Activated CD4-positive, alpha-beta memory T cell treated with anti-CD3 and anti-CD28 coated beads for 36 hours (primary cell): ENCODE measurements at regions of chr18 and their contacts with region 1.

Region 1: DNA sequence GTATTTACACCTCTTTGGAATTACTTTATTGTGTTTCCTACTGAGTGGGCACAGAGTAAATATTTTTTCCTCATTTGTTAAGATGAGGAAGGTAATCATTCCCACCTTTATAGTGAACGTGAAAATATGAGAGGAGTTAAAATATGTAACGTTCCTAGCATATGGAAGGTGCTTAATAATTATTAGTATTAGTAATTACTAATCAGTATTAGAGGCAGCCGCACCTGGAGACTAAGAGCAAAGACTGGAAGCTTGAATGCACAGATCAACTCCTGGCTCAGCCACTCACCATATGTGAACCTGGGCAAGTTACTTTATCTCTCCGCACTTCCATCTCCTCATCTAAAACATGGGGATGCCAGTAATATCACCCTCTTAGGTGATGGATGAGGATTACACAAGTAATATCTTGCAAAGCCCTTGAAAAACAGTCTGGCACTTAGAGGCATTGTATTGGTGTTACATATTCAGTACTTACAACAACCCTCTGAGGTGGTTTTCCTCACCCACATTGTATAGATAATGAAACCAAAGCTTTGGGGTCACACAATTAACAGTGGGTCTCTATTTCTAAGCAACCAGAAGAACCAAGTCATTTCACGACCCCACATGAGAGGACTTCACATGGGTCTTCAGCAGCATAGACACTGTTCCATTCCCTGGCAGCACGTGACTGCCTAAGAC is 100.3 kb upstream of the KCTD1 start:
- DNase-seq: no peak
- H3K4me3 Mint-ChIP-seq: no peak overlapping the region
- H3K27ac Mint-ChIP-seq: no peak overlapping the region
- H3K4me1 Mint-ChIP-seq: no peaks in the 10 kb centered on the region
- H3K27me3 Mint-ChIP-seq: peaks cover 22% of the 10 kb centered on the region

Region 2: GRCh38 chr18:26383454-26384270 is 265.0 kb before region 1 on chr18:
- CTCF ChIA-PET with region 1: interaction called, 8 read pairs
- POLR2A ChIA-PET with region 1: no interaction called
- intact Hi-C with region 1: loop called (anchors 1 kb)
- DNase-seq: no peak
- H3K4me3 Mint-ChIP-seq: no peak overlapping the region
- H3K27ac Mint-ChIP-seq: no peak overlapping the region
- H3K4me1 Mint-ChIP-seq: no peaks in the 10 kb centered on the region
- H3K27me3 Mint-ChIP-seq: no peaks in the 10 kb centered on the region

Region 3: DNA sequence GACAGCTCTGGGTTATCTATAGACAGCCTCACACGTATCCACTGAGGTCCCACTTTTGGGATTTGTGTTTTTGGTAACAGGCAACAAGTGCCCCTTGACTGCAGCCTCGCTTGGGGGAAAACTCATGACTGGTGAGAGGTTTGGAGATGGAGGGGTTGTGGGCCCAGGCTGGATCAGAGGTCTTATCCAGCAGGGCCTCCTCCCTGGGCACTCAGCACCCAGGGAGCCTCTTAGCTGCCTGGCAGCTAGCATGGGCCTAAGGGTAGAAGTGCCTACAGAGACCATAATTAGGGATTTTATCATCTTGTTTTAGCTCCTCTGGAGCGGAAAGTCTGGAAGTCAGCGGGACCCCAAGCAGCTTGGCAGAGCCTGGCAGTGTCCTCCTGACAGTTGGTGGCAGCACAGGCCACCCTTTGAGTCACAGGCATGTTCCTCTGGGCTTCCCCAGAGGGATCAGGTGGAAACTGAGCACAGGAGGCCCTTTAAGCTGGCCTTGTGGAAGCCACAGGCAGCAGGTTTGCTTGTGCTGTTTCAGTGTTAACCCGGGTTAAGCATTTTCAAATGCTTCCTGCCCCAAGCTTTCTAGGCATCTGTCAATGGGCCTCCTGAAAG is 243.4 kb before region 1 on chr18:
- CTCF ChIA-PET with region 1: interaction called, 3 read pairs
- POLR2A ChIA-PET with region 1: no interaction called
- intact Hi-C with region 1: loop called (anchors 1 kb)
- DNase-seq: peak; percentile 14
- H3K4me3 Mint-ChIP-seq: no peak overlapping the region
- H3K27ac Mint-ChIP-seq: no peak overlapping the region
- H3K4me1 Mint-ChIP-seq: no peaks in the 10 kb centered on the region
- H3K27me3 Mint-ChIP-seq: no peaks in the 10 kb centered on the region